Dorsolateral prefrontal cortex (tissue), 120 donors: ENCODE measurements at regions of chr17 and their contacts with region 1.

Region 1: DNA sequence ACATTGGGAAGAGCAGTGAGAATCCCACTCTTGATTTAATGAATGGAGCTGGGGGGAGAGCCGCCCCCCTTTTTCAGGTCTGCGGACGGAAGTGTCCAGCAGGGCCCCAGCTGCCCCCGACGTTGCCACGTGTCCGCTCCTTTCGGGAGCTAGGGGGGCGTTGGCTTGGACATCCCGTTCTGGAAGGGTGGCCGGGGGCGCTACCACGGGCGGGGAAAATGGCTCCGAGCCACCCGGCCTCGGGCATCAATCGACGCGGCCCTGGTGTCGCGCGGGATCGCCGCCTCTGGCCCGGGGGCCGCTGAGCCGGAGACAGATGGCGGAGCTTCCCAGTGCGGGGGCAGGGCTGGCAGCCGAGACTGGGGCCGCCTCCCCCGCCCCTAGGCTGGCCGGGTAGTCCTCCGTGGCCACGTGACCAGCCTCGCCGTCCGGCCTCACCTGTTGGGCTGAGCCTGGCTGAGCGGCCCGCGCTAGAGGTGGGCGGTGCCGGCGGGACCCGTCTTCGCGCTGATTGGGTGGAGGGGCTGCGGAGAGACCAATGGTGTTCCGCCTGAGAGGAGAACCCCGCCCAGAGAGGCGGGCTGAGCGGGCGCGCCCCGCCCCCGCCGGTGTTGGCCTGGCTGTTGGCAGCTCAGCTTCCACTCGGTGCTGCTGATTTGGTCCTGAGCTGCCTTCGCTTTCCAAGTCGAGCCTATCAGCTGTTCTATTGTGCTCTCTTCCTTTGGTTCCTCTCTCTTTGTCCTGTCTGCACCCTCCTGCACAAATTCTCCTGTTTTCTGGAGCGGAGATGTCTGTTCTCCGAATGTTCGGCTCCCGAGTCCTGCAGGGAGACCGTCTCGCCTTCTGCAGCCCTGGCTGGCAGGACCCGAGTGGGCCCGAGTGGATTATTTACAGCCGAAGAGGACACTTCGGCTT is 8.3 kb downstream of the HS3ST3B1 start:
- DNase-seq: peak; percentile 49 to 98 (median 70)
- H3K4me3 ChIP-seq: peak overlapping the region; percentile 12 to 78 (median 53)
- H3K27ac ChIP-seq: peak overlapping the region in 1 of 59 donors; percentile 77
- H3K27me3 ChIP-seq: peaks cover 0 to 78% (median 62%) of the 10 kb centered on the region in 45 donors
- CTCF ChIP-seq: peak in 1 of 56 donors; percentile 14

Region 2: GRCh38 chr17:13337864-13338371 is 971.3 kb before region 1 on chr17:
- intact Hi-C with region 1: loop called (anchors 5 to 10 kb)
- DNase-seq: peak in 2 of 10 donors; percentile 12 to 24
- H3K4me3 ChIP-seq: peak overlapping the region in 48 of 59 donors; percentile 1 to 63 (median 40)
- H3K27ac ChIP-seq: no peak overlapping the region
- H3K27me3 ChIP-seq: peaks cover 0 to 46% (median 8%) of the 10 kb centered on the region in 45 donors
- CTCF ChIP-seq: peak; percentile 52 to 82 (median 66)